ENCODE measurements at regions of chr13 and their contacts with region 1.

Region 1: GRCh38 chr13:20566898-20567874 is at the start of gene IFT88:
- DNase-seq: peak; percentile 96
- H3K4me3 ChIP-seq: peak within 1 kb of the TSS; percentile 57
- H3K27ac ChIP-seq: peak within 1 kb of the TSS; percentile 83
- H3K4me1 ChIP-seq: peaks cover 8% of the 10 kb centered on the region
- H3K27me3 ChIP-seq: no peaks in the 10 kb centered on the region
- CTCF ChIP-seq: no peak
- total RNA-seq, gene IFT88: 19.4 and 23.2 TPM in 2 replicates

Region 2: DNA sequence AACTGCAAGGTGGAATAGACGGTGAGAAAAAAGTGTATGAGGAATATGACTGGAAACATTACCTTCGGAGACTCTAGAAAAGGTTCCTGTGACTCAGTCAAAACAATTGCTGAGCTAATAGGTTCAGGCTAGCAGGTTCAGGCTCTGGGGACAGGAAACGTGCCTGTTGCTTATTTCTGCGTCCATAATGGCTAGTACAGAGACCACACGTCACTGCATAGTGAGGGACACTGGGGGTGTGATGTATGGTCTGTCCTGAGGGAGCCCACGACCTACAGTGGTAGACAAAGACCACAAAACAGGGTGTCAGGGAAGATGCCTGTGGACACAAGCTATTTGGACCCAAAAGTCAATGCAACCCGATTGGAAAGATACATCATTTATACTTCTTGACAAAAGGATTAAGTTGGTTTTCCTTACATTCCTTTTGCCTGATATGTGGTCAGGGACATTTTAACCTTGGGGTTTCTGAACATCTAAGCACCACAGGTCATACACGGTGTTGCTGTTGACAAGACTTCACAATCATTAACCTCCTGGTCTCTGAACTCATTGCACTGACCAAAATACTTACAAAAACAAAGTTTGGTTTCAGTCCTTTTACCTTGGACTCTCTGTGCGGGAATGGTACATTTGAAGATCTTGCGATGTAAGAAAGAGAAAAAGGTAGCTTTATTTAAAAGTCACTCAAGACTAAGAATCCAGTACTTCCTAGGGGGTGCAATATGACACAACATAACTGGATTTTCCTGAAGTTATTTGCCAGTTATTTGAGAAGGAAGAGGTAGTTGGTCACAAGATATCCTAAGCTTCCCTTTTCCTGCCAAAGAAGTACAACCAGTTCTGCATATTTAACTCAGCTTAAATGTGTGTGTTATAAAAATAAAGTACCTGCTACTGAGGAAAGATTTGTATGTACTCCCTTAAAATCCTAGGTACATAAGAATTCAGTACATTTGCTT is 61.5 kb before region 1 on chr13:
- CTCF ChIA-PET with region 1: no interaction called
- POLR2A ChIA-PET with region 1: no interaction called
- intact Hi-C with region 1: no loop called
- DNase-seq: no peak
- H3K4me3 ChIP-seq: no peak overlapping the region
- H3K27ac ChIP-seq: no peak overlapping the region
- H3K4me1 ChIP-seq: no peaks in the 10 kb centered on the region
- H3K27me3 ChIP-seq: no peaks in the 10 kb centered on the region
- CTCF ChIP-seq: no peak

Region 3: DNA sequence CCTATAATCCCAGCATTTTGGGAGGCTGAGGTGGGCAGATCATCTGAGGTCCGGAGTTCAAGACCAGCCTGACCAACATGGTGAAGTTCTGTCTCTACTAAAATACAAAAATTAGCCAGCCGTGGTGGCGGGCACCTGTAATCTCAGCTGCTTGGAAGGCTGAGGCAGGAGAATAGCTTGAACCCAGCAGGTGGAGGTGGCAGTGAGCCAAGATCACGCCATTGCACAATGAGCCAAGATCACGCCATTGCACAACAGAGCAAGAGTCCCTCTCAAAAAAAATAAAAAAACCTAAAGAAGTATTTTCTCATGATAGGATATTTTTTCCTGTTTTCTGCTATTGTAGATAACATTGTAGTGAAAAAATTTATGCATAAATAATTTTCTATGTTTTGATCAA is 13.1 kb after region 1 on chr13:
- CTCF ChIA-PET with region 1: no interaction called
- POLR2A ChIA-PET with region 1: interaction called, 13 read pairs
- intact Hi-C with region 1: no loop called
- DNase-seq: no peak
- H3K4me3 ChIP-seq: no peak overlapping the region
- H3K27ac ChIP-seq: no peak overlapping the region
- H3K4me1 ChIP-seq: no peaks in the 10 kb centered on the region
- H3K27me3 ChIP-seq: no peaks in the 10 kb centered on the region
- CTCF ChIP-seq: no peak

Region 4: GRCh38 chr13:20616059-20616797 is 49.0 kb after region 1 on chr13:
- CTCF ChIA-PET with region 1: no interaction called
- POLR2A ChIA-PET with region 1: no interaction called
- intact Hi-C with region 1: loop called (anchors 5 kb)
- DNase-seq: no peak
- H3K4me3 ChIP-seq: no peak overlapping the region
- H3K27ac ChIP-seq: no peak overlapping the region
- H3K4me1 ChIP-seq: no peaks in the 10 kb centered on the region
- H3K27me3 ChIP-seq: no peaks in the 10 kb centered on the region
- CTCF ChIP-seq: no peak

Measured in A673 (cell line).